Posterior vena cava (tissue), 2 donors: ENCODE measurements at regions of chr1 and their contacts with region 1.

Region 1: GRCh38 chr1:93447516-93448291 is at the start of gene FNBP1L:
- DNase-seq: peak; percentile 89
- total RNA-seq, gene FNBP1L: 9.3 to 11.3 TPM

Region 2: DNA sequence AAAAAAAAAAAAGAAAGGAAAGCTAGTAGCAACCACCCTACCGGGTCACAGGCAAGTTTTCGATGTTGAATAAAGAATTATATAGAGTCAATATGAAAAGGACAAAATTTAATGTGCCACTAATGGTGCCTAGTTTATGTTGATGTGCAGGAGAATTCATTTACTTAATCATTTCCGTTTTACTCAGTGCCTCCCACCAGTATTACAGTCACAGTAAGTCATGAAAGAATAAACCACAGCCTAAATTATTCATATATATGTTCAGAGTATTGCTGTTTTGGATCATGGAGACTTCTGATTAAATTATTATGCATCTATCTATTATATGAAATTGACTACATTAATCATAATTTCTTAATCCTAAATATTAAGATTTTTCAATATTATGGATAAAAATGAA is 35.5 kb after region 1 on chr1:
- intact Hi-C with region 1: loop called in 1 of 2 experiments (anchors 1 kb)
- DNase-seq: no peak

Region 3: DNA sequence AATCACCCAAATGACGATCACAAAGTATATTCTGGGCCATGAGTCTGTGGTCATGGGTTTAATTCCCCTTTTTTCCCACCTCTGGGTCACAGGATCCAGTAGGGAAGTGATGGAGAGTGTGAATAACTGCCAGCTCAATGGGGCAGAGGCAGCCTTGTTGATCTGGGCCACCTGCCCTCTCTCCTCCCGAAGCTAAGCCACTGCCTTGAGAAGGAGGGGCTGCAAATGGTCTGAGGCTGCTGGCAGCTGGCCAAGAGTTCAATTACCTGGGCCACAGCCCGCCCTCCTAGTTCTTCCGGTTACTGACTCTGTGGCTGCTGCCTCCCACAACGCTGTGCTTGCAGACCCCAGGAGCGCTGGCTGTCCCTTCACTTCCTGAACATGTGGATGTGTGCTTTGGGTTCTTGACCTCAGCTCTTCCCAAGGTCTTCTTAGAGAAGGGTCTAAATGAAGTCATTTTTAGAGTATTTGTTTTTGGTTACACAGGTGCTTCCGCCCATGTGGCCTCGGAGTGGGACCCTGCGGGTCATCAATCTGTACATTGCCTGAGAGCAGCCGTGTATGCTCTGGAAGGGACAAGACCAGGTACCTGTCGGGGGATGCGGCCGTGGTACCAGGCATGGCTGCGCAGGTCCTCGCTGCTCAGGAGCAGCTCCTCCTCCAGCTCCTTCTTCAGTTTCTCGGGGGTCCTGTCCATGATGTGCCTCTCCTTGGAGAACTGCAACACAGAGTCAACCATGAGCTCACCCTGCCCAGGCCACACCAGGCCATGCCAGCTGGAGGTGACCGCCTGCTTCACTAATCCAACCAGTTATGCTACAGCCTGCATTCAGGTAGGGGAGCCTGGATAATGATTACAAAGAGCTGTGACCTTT is 144.2 kb after region 1 on chr1:
- intact Hi-C with region 1: loop called in 1 of 2 experiments (anchors 10 kb)
- DNase-seq: peak; percentile 71